ENCODE measurements at regions of chr3 and their contacts with region 1.

Region 1: GRCh38 chr3:41900265-41900664 is 61.6 kb downstream of the ULK4 start:
- DNase-seq: no peak
- ATAC-seq: no peak
- H3K4me3 ChIP-seq: no peak overlapping the region
- H3K27ac ChIP-seq: no peak overlapping the region
- H3K4me1 ChIP-seq: peaks cover 0 to 8% (median 0%) of the 10 kb centered on the region in 12 donors
- H3K27me3 ChIP-seq: no peaks in the 10 kb centered on the region
- CTCF ChIP-seq: no peak
- POLR2A ChIP-seq: no peak

Region 2: GRCh38 chr3:41768363-41768762 is 131.9 kb before region 1 on chr3:
- intact Hi-C with region 1: no loop called
- DNase-seq: no peak
- ATAC-seq: no peak
- H3K4me3 ChIP-seq: no peak overlapping the region
- H3K27ac ChIP-seq: no peak overlapping the region
- H3K4me1 ChIP-seq: peaks cover 0 to 4% (median 0%) of the 10 kb centered on the region in 12 donors
- H3K27me3 ChIP-seq: no peaks in the 10 kb centered on the region
- CTCF ChIP-seq: no peak
- POLR2A ChIP-seq: no peak

Region 3: DNA sequence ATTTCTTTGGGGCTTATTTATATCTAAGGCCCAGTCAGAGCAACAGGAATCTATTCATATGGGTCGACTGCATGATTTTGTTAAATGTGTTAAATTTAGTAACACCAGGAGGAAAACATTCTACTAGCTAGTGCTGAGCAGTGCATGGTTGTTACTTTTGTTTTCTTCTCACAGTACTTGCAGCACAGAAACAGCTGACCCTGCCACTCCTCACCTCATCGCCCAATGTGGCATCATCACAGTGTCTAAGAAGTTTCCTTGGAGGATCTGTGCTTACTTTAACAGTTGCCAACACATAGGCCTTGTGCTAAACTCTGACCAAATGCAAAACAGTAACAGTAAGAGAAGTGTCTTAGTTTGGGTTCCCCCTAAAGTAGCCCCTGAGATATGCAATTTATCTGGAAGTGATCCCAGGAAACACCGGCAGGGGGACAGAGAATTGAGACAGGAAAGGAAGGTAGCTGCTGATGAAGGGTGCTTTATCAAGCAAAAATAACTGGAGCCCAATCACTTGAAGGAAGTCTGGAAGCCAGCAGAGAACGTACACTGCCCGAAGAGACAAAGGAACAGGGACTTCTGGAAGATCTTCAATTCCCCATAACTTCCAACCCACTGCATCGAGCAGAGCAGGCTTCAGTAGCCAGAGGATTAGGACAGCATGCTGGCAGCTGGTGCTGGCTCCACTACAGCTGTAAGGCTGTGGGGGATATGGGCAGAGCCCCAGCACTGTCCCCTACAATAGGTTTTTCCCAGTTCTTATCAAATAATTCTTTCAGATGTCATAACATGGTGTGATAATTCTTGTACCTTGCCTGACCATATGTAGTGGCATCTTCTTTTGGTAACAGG is 97.7 kb after region 1 on chr3:
- intact Hi-C with region 1: loop called in 3 of 10 experiments (anchors 5 to 10 kb)
- DNase-seq: no peak
- ATAC-seq: peak in 3 of 4 donors; percentile 27 to 53 (median 52)
- H3K4me3 ChIP-seq: no peak overlapping the region
- H3K27ac ChIP-seq: peak overlapping the region in 3 of 12 donors; percentile 1 to 22 (median 19)
- H3K4me1 ChIP-seq: peaks cover 0 to 14% (median 9%) of the 10 kb centered on the region in 12 donors
- H3K27me3 ChIP-seq: no peaks in the 10 kb centered on the region
- CTCF ChIP-seq: peak; percentile 21 to 61 (median 46)
- POLR2A ChIP-seq: no peak